ENCODE measurements at regions of chr1 and their contacts with region 1.

Region 1: DNA sequence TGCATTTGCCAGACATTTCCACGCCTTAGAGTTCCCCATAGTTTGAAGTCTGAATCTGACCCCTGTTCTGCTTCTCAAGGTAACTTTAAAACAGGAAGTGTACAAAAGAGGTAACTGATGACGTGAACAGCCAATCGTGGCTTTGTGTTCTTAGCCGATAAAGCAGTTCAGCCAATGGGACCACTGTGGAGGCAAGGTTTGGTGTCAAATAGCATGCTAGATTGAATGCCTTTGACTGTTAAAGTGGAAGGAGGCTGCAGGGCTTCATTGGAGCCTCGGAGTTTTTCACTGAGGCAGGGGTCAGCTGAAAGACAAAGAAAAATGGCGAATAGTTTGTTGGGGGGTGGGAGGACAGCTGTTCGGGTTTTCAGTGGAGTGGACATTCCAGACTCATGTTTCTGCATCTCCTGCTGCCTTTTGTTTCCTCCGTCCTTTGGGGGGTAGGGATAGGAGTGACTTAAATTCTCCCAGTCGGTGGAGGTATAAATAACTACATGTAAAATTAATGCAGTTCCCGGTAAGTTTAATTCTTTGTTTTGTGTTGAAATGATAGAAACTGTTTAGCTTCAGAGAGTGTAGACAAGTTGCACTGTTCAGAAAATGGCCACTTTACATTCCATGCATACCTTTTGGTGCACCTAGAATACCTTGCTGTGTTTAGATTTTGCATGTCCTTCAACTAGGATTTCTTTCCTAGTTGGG is 17.7 kb downstream of the NFYC start:
- DNase-seq: peak; percentile 97
- H3K4me3 ChIP-seq: peak overlapping the region; percentile 78
- H3K27ac ChIP-seq: peak overlapping the region; percentile 86
- H3K4me1 ChIP-seq: peaks cover 61% of the 10 kb centered on the region
- CTCF ChIP-seq: no peak

Region 2: GRCh38 chr1:40531381-40532061 is 177.7 kb before region 1 on chr1 and contains the start of gene ZNF684:
- CTCF ChIA-PET with region 1: no interaction called
- POLR2A ChIA-PET with region 1: no interaction called
- intact Hi-C with region 1: loop called (anchors 5 kb)
- DNase-seq: peak; percentile 95
- H3K4me3 ChIP-seq: peak within 1 kb of the TSS; percentile 81
- H3K27ac ChIP-seq: peak within 1 kb of the TSS; percentile 16
- H3K4me1 ChIP-seq: peaks cover 15% of the 10 kb centered on the region
- CTCF ChIP-seq: no peak
- total RNA-seq, gene ZNF684: 5.4 and 6.7 TPM in 2 replicates

Region 3: DNA sequence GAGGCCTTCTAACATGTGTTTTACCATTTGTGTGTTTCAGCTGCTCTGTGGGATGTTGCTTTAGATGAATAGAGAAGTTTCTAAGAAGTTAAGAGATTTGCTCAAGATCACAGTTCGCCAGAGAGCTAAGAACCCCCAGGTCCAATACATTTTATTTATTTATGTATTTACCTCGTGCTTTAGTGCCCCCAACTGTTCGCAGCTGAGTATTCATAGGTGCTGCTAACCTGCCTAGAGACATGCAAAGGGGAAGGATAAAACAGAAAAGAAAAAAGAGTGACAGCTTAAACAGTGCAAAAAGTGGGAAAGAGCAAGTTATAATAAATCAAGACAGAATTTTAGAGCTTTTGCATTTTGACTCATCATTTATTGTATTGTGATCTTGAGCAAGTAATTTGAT is 13.4 kb after region 1 on chr1:
- CTCF ChIA-PET with region 1: no interaction called
- POLR2A ChIA-PET with region 1: interaction called, 16 read pairs
- intact Hi-C with region 1: no loop called
- DNase-seq: peak; percentile 24
- H3K4me3 ChIP-seq: no peak overlapping the region
- H3K27ac ChIP-seq: no peak overlapping the region
- H3K4me1 ChIP-seq: no peaks in the 10 kb centered on the region
- CTCF ChIP-seq: peak; percentile 75

Measured in OCI-LY7 (cell line).